PC-9 (cell line): ENCODE measurements at regions of chrX and their contacts with region 1.

Region 1: DNA sequence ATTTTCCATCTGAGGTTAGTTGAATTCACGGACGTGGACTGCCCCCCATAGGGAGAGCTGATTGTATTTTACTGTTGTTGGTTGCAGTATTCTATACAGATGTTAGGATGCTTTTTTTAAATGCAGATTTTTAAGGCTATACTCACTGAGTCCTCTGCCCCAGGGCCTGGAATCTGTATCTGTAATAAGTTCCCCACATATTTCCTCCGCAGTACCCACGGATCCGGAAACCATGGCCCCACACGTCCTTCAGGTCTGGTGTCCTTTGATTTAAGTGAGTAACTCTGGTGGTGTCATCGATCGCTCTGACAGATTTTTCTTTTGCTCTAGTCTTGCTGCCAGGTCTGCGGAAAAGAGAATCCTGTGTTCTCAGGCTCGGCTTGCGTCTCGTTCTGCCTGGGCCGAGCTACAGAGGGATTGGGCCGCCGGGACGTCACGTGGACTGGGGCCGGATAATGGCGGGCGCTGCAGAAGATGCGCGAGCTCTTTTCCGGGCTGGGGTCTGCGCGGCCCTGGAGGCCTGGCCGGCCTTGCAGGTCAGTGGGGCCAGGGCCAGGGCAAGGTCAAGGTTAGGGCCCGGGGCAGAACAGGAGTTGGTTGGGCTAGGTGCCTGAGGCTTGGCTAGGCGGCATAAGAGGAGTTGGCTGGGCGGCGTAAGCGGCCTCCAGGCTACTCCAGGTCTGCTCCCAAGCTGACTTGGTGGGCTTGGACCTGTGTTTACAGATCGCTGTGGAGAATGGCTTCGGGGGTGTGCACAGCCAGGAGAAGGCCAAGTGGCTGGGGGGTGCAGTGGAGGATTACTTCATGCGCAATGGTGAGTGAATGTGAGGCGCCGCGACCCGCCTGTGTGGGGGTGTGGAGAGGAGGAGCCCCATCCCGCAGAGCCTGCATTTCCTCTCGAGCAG is at the start of gene TSR2:
- DNase-seq: peak; percentile 76 to 80
- H3K4me3 ChIP-seq: peak within 1 kb of the TSS; percentile 83
- H3K27ac ChIP-seq: no peak within 1 kb of the TSS
- H3K4me1 ChIP-seq: peaks cover 8% of the 10 kb centered on the region
- H3K27me3 ChIP-seq: no peaks in the 10 kb centered on the region
- CTCF ChIP-seq: peak; percentile 23; the same call in 1 of the 2 replicates
- total RNA-seq, gene TSR2: 53.0 and 56.9 TPM in 2 replicates

Region 2: DNA sequence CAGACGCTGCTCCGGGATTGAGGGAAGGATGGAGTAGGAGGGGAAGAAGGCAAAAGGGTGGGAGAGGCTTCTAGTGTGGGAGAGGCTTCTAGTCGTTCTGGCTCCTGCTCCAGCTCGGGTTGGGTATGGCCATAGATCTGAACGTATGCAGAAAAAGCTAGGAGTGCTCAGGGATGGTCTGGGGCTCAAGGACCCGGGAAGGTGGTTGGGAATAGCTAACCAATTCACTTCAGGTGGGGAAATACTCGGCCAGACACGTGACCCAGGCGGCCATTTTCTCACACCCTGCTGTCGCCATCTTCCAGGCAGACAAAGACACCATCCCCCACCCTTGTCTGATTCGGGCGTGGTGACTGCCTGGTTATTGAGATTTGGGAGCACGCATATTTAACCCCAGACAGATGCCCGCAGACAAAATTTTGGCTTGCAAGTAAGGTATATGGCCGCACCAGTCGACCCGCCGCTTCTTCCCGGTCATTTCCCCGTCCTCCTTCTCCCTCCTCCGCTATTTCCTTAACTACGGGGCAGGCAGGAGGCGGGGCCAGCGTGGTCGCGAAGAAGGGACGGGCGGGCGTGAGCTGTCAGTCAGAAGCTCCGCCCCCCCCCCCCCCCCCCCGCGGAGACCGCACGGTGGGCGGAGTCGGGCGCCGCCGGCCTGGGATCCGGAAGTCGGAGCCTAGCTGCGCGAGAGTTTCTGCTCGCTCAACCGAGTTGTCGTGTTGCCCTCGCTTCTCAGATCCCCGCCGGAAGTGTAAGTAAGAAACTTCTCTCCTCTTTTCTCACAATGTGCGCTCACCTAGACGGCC is 89.5 kb after region 1 on chrX and contains the start of gene GNL3L:
- CTCF ChIA-PET with region 1: no interaction called
- POLR2A ChIA-PET with region 1: no interaction called
- intact Hi-C with region 1: loop called (anchors 5 kb)
- DNase-seq: peak; percentile 74 to 87
- H3K4me3 ChIP-seq: peak within 1 kb of the TSS; percentile 93
- H3K27ac ChIP-seq: peak within 1 kb of the TSS; percentile 84
- H3K4me1 ChIP-seq: peaks cover 10% of the 10 kb centered on the region; the same call in 1 of the 2 replicates
- H3K27me3 ChIP-seq: no peaks in the 10 kb centered on the region
- CTCF ChIP-seq: no peak
- total RNA-seq, gene GNL3L: 61.4 and 77.4 TPM in 2 replicates